ENCODE measurements at regions of chr10 and their contacts with region 1.

Region 1: DNA sequence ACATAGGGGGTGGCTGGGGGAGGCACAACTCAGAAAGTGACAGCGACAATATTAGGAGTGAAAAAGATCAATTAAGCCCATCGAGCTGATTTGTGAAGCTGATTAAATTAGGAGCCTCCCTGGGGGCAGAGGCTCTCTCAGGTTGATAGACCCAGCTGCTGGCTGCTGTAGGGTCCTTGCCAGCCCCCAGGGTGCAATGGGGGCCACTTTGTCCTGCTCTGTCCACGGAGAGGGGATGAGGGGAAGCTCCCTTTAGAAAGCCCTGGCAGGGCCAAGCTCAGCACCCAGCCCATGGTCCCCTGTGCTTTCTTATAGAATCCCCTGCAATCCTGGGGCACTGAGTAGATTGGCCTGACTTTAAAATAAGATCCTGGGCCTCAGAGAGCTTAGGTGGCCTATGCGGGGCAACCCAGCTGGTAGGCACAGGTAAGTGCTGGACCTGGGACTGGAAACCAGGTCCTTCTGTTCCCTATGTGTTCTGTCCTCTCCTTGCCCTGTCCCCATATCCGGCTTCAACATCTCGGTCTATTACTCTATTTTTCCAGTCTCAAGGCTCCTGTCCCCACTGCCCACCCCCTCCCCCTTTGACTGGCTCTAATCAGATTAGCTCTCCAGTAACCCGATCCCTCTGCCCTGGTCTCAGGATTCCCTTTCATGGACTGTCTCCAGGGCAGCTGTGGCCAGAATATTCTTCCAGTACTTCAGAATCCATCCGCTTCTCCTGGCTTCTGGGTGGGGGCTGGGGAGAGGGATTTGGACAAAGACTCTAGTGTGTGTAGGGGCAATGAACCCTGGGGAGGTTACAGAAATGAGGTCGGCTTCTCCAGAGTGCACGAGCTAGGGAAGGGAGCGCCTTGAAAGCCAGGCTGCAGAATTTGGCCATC is 259.6 kb downstream of the RPS24 start:
- DNase-seq: no peak
- H3K4me3 ChIP-seq: no peak overlapping the region
- H3K27ac ChIP-seq: no peak overlapping the region
- H3K4me1 ChIP-seq: no peaks in the 10 kb centered on the region
- H3K27me3 ChIP-seq: peaks cover 29% of the 10 kb centered on the region; the same call in 1 of the 2 replicates
- CTCF ChIP-seq: no peak

Region 2: DNA sequence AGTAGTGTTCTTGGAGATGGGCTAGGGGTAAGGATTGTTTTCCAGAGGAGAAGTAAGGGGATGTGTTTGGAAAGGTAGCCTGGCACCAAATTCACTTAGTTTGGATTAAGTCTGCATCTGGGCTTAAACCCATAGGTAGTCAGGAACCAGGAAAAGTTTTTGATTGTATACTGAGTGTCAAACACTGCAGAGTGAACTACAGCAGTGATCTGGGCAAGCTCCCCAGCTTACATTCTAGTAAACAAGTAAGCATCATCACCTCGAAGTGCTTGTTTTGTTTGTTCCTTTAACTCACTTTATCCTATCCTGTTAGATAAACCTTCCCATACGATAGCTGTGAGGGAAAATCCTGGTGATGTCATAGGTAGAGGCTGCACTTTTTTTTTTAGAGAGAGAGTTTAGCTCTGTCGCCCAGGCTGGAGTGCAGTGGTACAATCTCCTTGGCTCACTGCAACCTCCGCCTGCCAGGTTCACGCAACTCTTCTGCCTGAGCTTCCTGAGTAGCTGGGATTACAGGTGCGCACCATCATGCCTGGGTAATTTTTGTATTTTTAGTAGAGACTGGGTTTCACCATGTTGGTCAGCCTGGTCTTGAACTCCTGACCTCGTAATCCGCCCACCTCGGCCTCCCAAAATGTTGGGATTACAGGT is 257.2 kb before region 1 on chr10:
- CTCF ChIA-PET with region 1: interaction called, 15 read pairs
- POLR2A ChIA-PET with region 1: no interaction called
- intact Hi-C with region 1: no loop called
- DNase-seq: no peak
- H3K4me3 ChIP-seq: peak overlapping the region; percentile 86; the same call in 1 of the 2 replicates
- H3K27ac ChIP-seq: no peak overlapping the region; the same call in 1 of the 2 replicates
- H3K4me1 ChIP-seq: peaks cover 39% of the 10 kb centered on the region
- H3K27me3 ChIP-seq: no peaks in the 10 kb centered on the region
- CTCF ChIP-seq: no peak

Region 3: GRCh38 chr10:78170026-78170475 is 123.2 kb before region 1 on chr10:
- CTCF ChIA-PET with region 1: no interaction called
- POLR2A ChIA-PET with region 1: no interaction called
- intact Hi-C with region 1: no loop called
- DNase-seq: peak in 1 of 2 experiments; percentile 64
- H3K4me3 ChIP-seq: no peak overlapping the region
- H3K27ac ChIP-seq: no peak overlapping the region
- H3K4me1 ChIP-seq: no peaks in the 10 kb centered on the region
- H3K27me3 ChIP-seq: peaks cover 34% of the 10 kb centered on the region
- CTCF ChIP-seq: no peak